MCF 10A (cell line): ENCODE measurements at regions of chr1 and their contacts with region 1.

Region 1: DNA sequence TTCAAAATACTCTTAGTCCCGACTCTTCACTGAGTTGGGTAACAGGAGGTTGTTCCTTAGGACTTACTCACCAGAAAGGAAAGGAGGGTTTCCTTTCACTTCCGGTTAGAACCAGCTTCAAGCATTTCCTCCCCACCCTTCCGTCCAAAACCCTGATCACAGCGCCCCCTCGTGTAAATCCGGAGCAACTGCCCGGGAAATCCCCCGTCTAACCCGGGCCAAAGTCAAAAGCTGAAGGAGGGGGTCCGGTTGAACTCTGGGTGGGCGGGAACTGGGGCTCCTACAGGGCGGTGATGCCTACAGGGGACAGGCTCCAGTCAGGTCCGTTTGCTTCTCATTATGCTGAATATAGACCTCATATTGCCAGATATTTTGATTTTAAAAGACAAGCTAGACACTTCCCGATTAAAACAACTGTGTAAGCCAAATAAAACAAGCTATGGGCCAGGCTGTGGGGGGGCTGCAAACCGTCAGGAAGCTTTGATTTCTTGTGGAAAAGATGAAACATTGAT is 15.0 kb upstream of the MTARC2 start:
- DNase-seq: peak; percentile 98
- H3K4me3 Mint-ChIP-seq: peak overlapping the region; percentile 19
- H3K27ac Mint-ChIP-seq: peak overlapping the region; percentile 44
- H3K4me1 Mint-ChIP-seq: peaks cover 32% of the 10 kb centered on the region
- H3K27me3 Mint-ChIP-seq: no peaks in the 10 kb centered on the region
- CTCF ChIP-seq: peak; percentile 99

Region 2: GRCh38 chr1:220217383-220217988 is 515.7 kb before region 1 on chr1:
- CTCF ChIA-PET with region 1: interaction called, 41 read pairs
- POLR2A ChIA-PET with region 1: interaction called, 9 read pairs
- intact Hi-C with region 1: loop called (anchors 1 kb)
- DNase-seq: peak; percentile 55
- H3K4me3 Mint-ChIP-seq: no peak overlapping the region
- H3K27ac Mint-ChIP-seq: no peak overlapping the region
- H3K4me1 Mint-ChIP-seq: peaks cover 25% of the 10 kb centered on the region
- H3K27me3 Mint-ChIP-seq: no peaks in the 10 kb centered on the region
- CTCF ChIP-seq: peak; percentile 52

Region 3: GRCh38 chr1:220287129-220287528 is 446.0 kb before region 1 on chr1:
- CTCF ChIA-PET with region 1: interaction called, 124 read pairs
- POLR2A ChIA-PET with region 1: interaction called, 10 read pairs
- intact Hi-C with region 1: no loop called
- DNase-seq: no peak
- H3K4me3 Mint-ChIP-seq: no peak overlapping the region
- H3K27ac Mint-ChIP-seq: no peak overlapping the region
- H3K4me1 Mint-ChIP-seq: peaks cover 5% of the 10 kb centered on the region
- H3K27me3 Mint-ChIP-seq: no peaks in the 10 kb centered on the region
- CTCF ChIP-seq: no peak

Region 4: DNA sequence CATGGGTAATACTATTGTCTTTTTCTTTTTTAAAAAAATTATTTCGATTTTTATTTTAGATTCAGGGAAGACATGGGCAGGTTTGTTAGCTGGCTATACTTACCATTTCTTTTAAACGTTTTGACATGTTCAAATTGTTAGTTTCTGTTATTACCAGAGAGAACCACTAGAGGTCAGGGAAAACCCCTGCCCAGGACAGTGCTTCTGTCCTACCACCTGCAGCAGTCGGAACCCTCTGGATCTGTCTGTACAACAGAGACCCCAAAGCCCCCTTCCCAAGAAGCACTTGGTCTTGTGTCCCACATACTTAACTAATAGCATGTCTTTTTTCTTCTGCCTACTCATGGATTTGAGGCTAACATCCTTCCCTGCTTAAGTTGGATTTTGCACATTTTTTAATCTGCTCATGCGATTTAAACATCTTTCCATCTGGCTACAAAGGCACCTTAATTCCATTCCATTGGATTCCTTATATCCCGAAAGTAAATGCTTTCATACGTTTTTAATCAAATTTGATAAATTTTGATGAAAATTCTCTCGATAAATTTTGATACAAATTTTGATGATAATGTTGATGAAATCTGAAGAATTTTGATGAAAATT is 53.0 kb before region 1 on chr1:
- CTCF ChIA-PET with region 1: interaction called, 50 read pairs
- POLR2A ChIA-PET with region 1: interaction called, 6 read pairs
- intact Hi-C with region 1: loop called (anchors 1 kb)
- DNase-seq: peak; percentile 75
- H3K4me3 Mint-ChIP-seq: no peak overlapping the region
- H3K27ac Mint-ChIP-seq: no peak overlapping the region
- H3K4me1 Mint-ChIP-seq: peaks cover 7% of the 10 kb centered on the region
- H3K27me3 Mint-ChIP-seq: no peaks in the 10 kb centered on the region
- CTCF ChIP-seq: peak; percentile 95

Region 5: GRCh38 chr1:220708936-220709801 is 24.0 kb before region 1 on chr1:
- CTCF ChIA-PET with region 1: interaction called, 26 read pairs
- POLR2A ChIA-PET with region 1: no interaction called
- intact Hi-C with region 1: no loop called
- DNase-seq: no peak
- H3K4me3 Mint-ChIP-seq: no peak overlapping the region
- H3K27ac Mint-ChIP-seq: no peak overlapping the region
- H3K4me1 Mint-ChIP-seq: no peaks in the 10 kb centered on the region
- H3K27me3 Mint-ChIP-seq: no peaks in the 10 kb centered on the region
- CTCF ChIP-seq: no peak

Region 6: GRCh38 chr1:220755309-220755708 is 22.2 kb after region 1 on chr1:
- CTCF ChIA-PET with region 1: interaction called, 87 read pairs
- POLR2A ChIA-PET with region 1: interaction called, 3 read pairs
- intact Hi-C with region 1: no loop called
- DNase-seq: no peak
- H3K4me3 Mint-ChIP-seq: no peak overlapping the region
- H3K27ac Mint-ChIP-seq: no peak overlapping the region
- H3K4me1 Mint-ChIP-seq: no peaks in the 10 kb centered on the region
- H3K27me3 Mint-ChIP-seq: peaks cover 6% of the 10 kb centered on the region
- CTCF ChIP-seq: no peak